CD8-positive, alpha-beta T cell (primary cell): ENCODE measurements at regions of chr10 and their contacts with region 1.

Region 1: GRCh38 chr10:130136226-130137089 is at the start of gene GLRX3:
- DNase-seq: peak; percentile 71 to 93 (median 88)
- ATAC-seq: peak; percentile 95
- H3K4me3 ChIP-seq: peak within 1 kb of the TSS; percentile 76 to 80
- H3K4me3 Mint-ChIP-seq: peak within 1 kb of the TSS; percentile 93
- H3K27ac ChIP-seq: peak within 1 kb of the TSS; percentile 61 to 79
- H3K27ac Mint-ChIP-seq: peak within 1 kb of the TSS; percentile 92
- H3K4me1 ChIP-seq: peaks cover 36% of the 10 kb centered on the region
- H3K4me1 Mint-ChIP-seq: peaks cover 42% of the 10 kb centered on the region
- H3K27me3 ChIP-seq: no peaks in the 10 kb centered on the region
- H3K27me3 Mint-ChIP-seq: peaks cover 4% of the 10 kb centered on the region
- CTCF ChIP-seq: no peak
- total RNA-seq, gene GLRX3: 20.7 to 23.7 TPM

Region 2: DNA sequence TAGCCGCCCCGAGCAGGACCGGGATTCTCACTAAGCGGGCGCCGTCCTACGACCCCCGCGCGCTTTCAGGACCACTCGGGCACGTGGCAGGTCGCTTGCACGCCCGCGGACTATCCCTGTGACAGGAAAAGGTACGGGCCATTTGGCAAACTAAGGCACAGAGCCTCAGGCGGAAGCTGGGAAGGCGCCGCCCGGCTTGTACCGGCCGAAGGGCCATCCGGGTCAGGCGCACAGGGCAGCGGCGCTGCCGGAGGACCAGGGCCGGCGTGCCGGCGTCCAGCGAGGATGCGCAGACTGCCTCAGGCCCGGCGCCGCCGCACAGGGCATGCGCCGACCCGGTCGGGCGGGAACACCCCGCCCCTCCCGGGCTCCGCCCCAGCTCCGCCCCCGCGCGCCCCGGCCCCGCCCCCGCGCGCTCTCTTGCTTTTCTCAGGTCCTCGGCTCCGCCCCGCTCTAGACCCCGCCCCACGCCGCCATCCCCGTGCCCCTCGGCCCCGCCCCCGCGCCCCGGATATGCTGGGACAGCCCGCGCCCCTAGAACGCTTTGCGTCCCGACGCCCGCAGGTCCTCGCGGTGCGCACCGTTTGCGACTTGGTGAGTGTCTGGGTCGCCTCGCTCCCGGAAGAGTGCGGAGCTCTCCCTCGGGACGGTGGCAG is 669.6 kb before region 1 on chr10 and contains the start of gene MGMT:
- CTCF ChIA-PET with region 1: no interaction called
- POLR2A ChIA-PET with region 1: interaction called, 3 read pairs
- intact Hi-C with region 1: loop called (anchors 1 to 2 kb)
- DNase-seq: peak; percentile 96 to 99 (median 98)
- ATAC-seq: peak; percentile 98
- H3K4me3 ChIP-seq: peak within 1 kb of the TSS; percentile 83 to 89
- H3K4me3 Mint-ChIP-seq: peak within 1 kb of the TSS; percentile 85
- H3K27ac ChIP-seq: peak within 1 kb of the TSS; percentile 63 to 78
- H3K27ac Mint-ChIP-seq: peak within 1 kb of the TSS; percentile 86
- H3K4me1 ChIP-seq: peaks cover 17% of the 10 kb centered on the region
- H3K4me1 Mint-ChIP-seq: peaks cover 27% of the 10 kb centered on the region
- H3K27me3 ChIP-seq: no peaks in the 10 kb centered on the region
- H3K27me3 Mint-ChIP-seq: no peaks in the 10 kb centered on the region
- CTCF ChIP-seq: no peak
- total RNA-seq, gene MGMT: 6.4 to 7.0 TPM

Region 3: DNA sequence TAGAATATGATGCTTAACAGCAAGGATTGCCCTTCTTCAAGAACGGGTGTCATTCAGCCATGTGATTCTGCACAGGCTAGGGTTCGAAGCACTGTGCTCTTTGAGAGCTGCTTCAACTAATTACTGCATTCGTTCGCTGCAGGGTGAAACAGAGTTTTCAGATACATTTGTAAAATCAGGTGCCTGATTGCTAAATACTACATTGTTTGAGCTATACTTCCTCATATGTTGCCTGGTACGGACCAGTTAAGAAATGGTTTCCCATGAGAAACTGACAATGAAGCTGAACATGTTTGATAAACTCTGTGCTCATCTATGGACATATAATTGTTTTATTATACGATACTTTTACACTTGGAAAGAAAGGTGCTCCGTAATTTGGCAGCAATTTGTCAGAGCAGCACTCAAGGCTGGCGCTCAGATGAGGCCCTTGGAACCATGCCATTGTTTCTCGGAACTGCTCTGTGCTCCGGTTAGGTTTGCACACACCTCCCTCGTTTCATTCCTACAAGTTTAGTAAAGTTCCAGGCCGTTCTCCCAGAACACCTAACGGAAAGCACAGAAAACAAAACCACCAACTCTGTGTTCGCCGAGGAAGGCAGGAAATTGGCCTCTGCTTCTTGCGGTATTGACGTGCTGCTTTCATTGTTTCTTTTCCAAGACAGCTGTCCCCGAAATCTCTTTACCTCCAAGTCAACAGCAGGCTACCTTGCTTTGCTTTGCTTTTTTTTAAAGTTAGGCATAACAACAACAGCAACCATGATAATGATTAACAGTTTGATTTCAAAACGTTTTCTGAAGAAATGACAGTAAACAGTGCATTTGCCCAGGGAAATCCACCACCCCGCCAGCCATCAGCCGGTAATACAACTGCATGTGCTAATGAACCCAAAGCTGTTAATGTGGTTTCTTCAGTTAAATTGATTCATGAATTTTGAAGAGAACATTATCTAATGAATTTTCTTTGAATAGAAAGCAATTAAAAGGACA is 379.3 kb before region 1 on chr10:
- CTCF ChIA-PET with region 1: no interaction called
- POLR2A ChIA-PET with region 1: no interaction called
- intact Hi-C with region 1: no loop called
- DNase-seq: peak in 2 of 9 experiments; percentile 5 to 34
- ATAC-seq: no peak
- H3K4me3 ChIP-seq: no peak overlapping the region
- H3K4me3 Mint-ChIP-seq: peak overlapping the region; percentile 67
- H3K27ac ChIP-seq: no peak overlapping the region
- H3K27ac Mint-ChIP-seq: no peak overlapping the region
- H3K4me1 ChIP-seq: no peaks in the 10 kb centered on the region
- H3K4me1 Mint-ChIP-seq: peaks cover 18% of the 10 kb centered on the region
- H3K27me3 ChIP-seq: no peaks in the 10 kb centered on the region
- H3K27me3 Mint-ChIP-seq: no peaks in the 10 kb centered on the region
- CTCF ChIP-seq: no peak

Region 4: DNA sequence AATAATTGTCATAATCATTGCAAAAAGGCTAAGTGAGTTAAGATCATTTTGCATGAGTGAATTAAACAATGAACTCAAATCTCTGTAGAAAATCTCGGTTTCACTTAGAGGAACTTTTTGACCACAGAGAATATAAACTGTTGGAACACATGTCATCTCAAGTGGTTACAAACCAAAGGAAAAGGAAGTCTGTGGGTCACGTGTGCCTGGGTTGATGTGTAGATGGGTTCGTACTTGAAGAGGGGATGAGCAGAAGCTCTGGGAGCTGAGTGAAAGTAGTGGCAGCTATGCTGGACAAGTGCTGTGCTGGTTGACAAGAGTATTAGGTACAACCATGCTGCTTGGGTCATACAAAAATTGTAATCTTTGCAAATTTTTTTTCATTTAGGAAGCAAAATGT is 34.7 kb after region 1 on chr10:
- CTCF ChIA-PET with region 1: no interaction called
- POLR2A ChIA-PET with region 1: no interaction called
- intact Hi-C with region 1: loop called in 1 of 2 experiments (anchors 1 kb)
- DNase-seq: peak in 5 of 9 experiments; percentile 19 to 72 (median 40)
- ATAC-seq: peak; percentile 62
- H3K4me3 ChIP-seq: no peak overlapping the region
- H3K4me3 Mint-ChIP-seq: peak overlapping the region; percentile 13
- H3K27ac ChIP-seq: no peak overlapping the region
- H3K27ac Mint-ChIP-seq: peak overlapping the region; percentile 10
- H3K4me1 ChIP-seq: peaks cover 34% of the 10 kb centered on the region
- H3K4me1 Mint-ChIP-seq: peaks cover 54% of the 10 kb centered on the region
- H3K27me3 ChIP-seq: no peaks in the 10 kb centered on the region
- H3K27me3 Mint-ChIP-seq: no peaks in the 10 kb centered on the region
- CTCF ChIP-seq: no peak

Region 5: DNA sequence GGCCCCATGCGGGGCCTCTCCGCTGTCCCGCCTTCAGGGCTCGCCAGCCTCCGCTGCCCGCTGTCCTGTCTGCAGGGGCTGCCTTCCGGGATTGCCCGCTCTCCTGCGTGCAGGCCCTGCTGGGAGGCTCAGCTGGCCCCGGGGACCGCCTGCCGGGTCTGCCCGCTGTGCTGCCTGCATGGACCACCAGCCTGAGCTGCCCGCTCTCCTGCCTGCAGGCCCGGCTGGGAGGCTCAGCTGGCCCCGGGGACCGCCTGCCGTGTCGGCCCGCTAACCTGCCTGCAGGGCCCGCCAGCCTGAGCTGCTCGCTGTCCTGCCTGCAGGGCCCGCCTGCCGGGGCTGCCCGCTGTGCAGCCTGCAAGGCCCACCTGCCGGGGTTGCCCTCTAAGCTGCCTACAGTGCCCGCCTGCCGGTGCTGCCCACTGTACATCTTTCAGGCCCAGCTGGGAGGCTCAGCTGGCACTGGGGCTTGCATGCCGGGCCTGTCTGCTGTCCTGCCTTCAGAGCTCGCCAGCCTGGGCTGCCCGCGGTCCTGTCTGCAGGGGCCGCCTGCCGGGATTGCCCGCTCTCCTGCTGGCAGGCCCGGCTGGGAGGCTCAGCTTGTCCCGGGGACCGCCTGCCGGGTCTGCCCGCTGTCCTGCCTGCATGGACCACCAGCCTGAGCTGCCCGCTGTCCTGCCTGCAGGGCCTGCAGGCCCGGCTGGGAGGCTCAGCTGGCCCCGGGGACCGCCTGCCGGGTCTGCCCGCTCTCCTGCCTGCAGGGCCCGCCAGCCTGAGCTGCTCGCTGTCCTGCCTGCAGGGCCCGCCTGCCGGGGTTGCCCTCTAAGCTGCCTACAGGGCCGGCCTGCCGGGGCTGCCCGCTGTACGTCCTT is 164.8 kb after region 1 on chr10:
- CTCF ChIA-PET with region 1: no interaction called
- POLR2A ChIA-PET with region 1: no interaction called
- intact Hi-C with region 1: loop called in 1 of 2 experiments (anchors 2 kb)
- DNase-seq: peak; percentile 32 to 74 (median 64)
- ATAC-seq: peak; percentile 70
- H3K4me3 ChIP-seq: peak overlapping the region; percentile 22 to 48
- H3K4me3 Mint-ChIP-seq: peak overlapping the region; percentile 73
- H3K27ac ChIP-seq: peak overlapping the region; percentile 14 to 59
- H3K27ac Mint-ChIP-seq: peak overlapping the region; percentile 84
- H3K4me1 ChIP-seq: no peaks in the 10 kb centered on the region
- H3K4me1 Mint-ChIP-seq: peaks cover 4% of the 10 kb centered on the region
- H3K27me3 ChIP-seq: no peaks in the 10 kb centered on the region
- H3K27me3 Mint-ChIP-seq: no peaks in the 10 kb centered on the region
- CTCF ChIP-seq: no peak